AG04449 (cell line): ENCODE measurements at regions of chr16 and their contacts with region 1.

Region 1: GRCh38 chr16:87416826-87417527 is 24.8 kb downstream of the MAP1LC3B start:
- DNase-seq: no peak
- H3K4me3 ChIP-seq: no peak overlapping the region
- CTCF ChIP-seq: peak; percentile 46

Region 2: DNA sequence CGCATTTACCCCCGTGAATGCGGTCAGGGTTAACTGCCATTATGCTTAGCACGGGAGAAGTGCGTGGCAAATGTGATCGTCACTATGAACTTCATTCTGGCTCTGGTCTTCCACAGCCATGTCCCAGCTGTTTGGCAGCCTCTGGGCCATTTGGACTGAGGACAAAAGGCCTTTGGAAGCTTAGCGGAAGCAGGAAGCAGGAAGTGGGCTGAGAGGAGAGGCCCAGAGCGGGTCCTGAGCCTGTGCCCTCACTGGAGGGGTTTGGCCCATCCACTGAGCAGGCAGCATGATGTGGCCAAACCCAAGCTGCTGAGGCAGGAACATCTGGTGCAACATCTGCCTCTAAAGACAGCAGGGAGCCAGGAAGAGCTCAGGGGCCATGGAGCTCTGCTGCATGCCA is 445.7 kb before region 1 on chr16:
- CTCF ChIA-PET with region 1: no interaction called
- POLR2A ChIA-PET with region 1: no interaction called
- DNase-seq: no peak
- H3K4me3 ChIP-seq: no peak overlapping the region
- CTCF ChIP-seq: no peak

Region 3: DNA sequence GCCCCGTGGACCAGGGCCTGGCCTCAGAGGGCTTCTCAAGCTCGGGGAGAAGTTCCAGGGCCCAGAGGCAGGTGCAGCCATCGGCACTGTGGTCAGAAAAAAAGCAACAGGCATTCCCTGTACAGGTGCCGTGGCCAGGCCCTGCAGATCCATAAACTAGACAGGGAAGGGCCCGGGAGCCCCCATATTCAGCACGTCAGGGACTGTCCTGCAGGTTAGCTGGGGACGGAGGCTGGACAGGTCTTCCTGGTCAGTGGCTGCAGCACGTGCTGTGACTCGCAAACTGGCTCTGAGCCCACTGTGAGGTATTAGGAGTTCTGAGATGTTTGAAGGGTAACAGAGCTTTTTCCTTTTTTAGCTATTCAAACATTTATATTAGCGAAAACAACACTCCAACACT is 84.8 kb before region 1 on chr16:
- CTCF ChIA-PET with region 1: no interaction called
- POLR2A ChIA-PET with region 1: no interaction called
- DNase-seq: no peak
- H3K4me3 ChIP-seq: no peak overlapping the region
- CTCF ChIP-seq: no peak

Region 4: DNA sequence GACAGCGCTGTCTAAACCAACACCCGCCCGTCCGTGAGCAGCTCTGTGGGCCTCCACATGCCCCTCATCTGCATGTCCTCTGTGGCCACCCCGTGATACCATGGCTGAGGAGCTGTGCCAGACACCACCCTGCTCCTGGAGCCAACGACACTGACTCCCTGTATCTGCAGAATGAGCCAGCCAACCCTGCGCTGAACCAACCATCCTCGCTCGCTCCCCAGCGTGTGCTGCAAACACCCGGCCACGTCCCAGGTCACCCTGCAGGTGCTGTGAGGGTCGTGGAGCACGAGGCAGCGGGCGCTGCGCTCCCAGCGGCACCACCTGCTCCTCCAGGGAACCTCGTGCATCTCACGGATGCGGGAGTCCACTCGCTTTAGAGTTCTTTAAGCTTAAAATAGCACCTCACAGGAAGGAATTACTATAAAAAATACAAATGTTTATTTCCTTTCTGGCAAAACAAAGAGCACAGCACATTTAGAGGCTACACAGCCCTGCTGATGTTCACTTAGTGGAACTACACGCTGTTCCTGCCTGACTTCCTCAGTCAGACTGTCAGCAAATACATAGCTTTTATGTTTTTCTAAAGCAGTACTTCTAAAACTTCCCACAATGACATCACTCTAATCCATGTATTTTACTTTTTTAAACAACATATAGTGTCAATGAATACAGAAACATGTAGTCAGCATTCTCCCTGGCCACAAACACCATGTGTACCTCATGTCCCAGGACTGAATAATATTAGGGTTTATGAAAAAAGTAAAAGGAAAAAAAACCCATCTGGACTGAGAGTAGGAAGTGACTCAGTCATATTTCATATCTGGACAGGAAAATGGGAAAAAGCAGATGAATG is 18.6 kb after region 1 on chr16:
- CTCF ChIA-PET with region 1: interaction called, 17 read pairs
- POLR2A ChIA-PET with region 1: no interaction called
- DNase-seq: peak; percentile 21
- H3K4me3 ChIP-seq: peak overlapping the region; percentile 25; the same call in 1 of the 2 replicates
- CTCF ChIP-seq: no peak

Region 5: GRCh38 chr16:87571136-87571867 is 154.3 kb after region 1 on chr16:
- CTCF ChIA-PET with region 1: interaction called, 41 read pairs
- POLR2A ChIA-PET with region 1: no interaction called
- DNase-seq: no peak
- H3K4me3 ChIP-seq: no peak overlapping the region
- CTCF ChIP-seq: peak; percentile 49

Region 6: GRCh38 chr16:87587636-87588035 is 170.7 kb after region 1 on chr16:
- CTCF ChIA-PET with region 1: interaction called, 17 read pairs
- POLR2A ChIA-PET with region 1: no interaction called
- DNase-seq: no peak
- H3K4me3 ChIP-seq: no peak overlapping the region
- CTCF ChIP-seq: no peak